AG04449 (cell line): ENCODE measurements at regions of chr12 and their contacts with region 1.

Region 1: DNA sequence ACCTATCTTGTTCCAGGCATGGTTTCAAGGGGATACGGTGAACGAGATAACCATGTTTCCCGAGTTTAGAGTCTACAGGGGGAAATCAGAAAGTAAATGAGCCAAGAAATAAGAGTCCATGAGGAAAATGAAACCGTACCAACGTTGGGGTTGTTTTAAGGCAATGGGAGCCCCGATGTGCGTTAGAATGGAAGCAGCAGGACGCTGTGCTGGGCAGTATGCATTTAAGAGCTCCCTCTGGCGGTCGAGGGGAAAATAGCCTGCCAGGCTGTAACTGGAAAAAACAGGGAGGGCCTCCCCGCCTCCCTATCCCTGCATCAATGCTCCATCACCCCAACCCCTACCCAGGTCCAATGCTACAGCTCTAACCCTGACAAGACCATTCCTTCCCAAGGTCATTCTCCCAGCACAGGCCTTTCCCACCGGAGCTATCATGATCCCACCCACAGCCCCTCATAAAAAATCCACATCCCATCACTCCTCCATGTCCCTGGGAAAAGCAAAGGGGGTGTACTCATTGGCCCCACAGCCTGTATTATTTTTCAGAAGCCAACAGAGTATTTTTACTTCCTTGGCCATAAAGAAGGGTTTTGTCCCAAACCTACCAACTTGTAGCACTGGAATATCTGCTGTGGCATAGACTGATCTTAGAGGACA is 226.3 kb upstream of the NOS1 start:
- DNase-seq: no peak
- H3K4me3 ChIP-seq: no peak overlapping the region
- CTCF ChIP-seq: peak; percentile 77

Region 2: DNA sequence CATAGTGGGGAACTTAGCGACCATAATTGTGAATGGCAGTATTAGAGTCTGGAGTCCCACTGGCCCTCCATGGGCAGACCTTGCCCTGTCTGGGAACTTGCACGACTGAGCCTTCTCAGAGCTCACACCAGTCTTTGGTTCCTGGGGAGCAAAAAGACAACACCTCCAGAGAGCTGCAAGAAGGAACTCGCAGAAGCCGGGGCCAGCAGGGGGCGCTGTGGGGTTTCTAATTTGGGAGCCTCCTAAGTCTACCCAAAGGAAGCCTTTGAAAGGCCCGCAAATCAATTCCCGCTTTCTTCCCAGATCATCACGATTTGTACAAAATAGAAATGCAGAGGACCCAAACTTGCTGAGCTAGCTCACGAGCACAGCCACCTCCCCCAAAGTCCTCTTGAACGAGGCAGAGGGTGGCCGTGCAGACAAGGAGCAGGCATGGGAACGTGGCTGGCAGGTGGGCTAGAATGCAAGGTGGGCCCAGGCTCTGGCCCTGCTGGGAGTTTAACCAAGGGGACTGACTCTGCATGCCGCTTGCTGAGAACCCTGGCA is 351.2 kb before region 1 on chr12:
- CTCF ChIA-PET with region 1: interaction called, 14 read pairs
- POLR2A ChIA-PET with region 1: no interaction called
- DNase-seq: no peak
- H3K4me3 ChIP-seq: no peak overlapping the region
- CTCF ChIP-seq: peak; percentile 64

Region 3: DNA sequence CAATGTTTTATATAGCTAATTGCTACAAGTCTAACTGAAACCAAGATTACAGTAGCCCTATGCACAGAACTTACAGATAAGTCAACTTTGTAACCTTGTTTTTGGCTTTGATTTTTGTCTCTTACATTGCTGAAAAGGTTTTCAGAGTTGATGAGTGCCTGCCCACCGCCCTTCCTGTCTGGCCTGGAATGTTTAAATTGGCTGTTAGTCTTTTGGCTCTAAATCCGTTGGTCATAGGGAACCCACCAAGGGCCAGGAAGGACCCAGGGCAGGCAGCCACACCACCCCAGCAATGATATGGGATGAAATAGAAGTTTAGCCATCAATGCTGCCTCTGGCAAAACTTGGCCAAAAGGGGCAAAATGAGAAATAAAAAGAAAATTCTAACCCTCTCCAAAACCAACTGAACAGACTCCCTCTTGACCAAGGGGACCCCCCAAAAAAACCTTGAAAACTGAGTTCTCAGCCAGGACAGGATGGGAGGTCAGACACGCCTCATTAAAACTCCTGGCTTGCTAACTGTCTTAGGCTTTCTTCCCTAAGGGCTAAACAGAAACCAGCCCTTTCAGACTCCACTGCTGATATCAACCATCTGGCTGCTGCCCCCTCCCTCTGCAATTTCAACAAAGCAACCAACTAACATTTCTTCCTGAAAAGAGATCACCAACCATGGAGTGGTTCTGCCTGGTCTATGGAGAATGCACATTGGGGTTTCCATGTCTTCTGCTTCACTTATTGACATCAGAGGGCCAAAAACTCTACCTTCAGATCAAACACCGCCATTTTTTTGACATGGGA is 15.8 kb after region 1 on chr12:
- CTCF ChIA-PET with region 1: interaction called, 35 read pairs
- POLR2A ChIA-PET with region 1: no interaction called
- DNase-seq: no peak
- H3K4me3 ChIP-seq: no peak overlapping the region
- CTCF ChIP-seq: no peak

Region 4: DNA sequence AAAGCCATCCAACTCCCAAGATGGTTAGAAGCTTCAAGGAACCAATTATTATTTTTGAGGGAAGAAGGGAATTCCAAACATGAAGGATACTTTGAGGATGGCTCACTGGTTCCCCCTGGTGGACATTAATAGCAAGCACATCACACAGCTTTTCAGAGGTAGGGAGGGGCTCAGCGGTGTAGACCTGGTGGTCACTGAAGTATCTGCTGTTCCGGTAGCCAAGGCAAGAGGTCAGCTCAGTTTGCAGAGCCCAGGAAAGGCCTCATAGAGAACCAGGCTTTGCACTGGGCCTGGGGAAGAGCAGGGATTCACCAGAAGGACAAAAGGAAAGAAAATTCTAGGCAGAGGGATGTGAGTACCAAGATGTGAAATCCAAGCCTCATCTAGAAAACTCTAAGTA is 262.3 kb after region 1 on chr12:
- CTCF ChIA-PET with region 1: interaction called, 21 read pairs
- POLR2A ChIA-PET with region 1: no interaction called
- DNase-seq: no peak
- H3K4me3 ChIP-seq: no peak overlapping the region
- CTCF ChIP-seq: peak; percentile 81

Region 5: DNA sequence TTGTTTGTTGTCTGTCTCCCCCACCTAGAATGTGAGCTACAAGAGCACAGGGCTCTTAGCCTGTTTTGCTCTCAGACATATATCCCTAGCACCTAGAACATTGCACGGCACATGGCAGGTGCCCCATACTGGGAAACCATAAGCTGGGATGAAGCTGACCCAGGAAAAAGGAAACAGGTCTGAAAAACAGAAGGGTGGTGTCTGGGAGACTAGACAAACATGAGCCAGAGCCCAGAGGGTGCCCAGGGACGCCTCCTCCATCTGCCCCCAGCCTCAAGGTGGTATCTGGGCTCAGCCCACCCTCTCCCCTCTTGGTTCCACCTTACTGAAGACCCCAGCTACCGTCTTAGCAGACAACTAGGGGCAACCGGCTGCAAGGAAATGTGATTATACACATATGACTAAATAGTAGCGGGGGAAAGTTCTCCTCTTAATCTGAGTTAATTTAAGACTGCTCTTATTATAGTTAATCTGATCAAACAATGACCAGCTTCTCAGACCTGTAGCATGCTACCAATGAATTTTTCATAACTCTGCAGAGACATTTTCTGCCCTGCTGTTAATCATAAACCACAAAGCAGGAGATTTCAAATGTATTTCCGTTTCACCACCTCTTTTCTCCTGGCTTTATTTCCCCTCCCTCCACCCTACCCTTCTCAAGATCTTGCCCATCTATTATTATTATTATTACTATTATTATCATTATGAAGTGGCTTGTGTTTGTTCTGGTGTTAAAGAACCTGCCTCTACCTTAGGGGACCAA is 349.1 kb after region 1 on chr12:
- CTCF ChIA-PET with region 1: no interaction called
- POLR2A ChIA-PET with region 1: no interaction called
- DNase-seq: no peak
- H3K4me3 ChIP-seq: no peak overlapping the region
- CTCF ChIP-seq: no peak